ENCODE measurements at regions of chr2 and their contacts with region 1.

Region 1: GRCh38 chr2:216090369-216090786 is 8.7 kb downstream of the TMEM169 start:
- DNase-seq: peak; percentile 30
- H3K4me3 Mint-ChIP-seq: no peak overlapping the region
- H3K27ac Mint-ChIP-seq: peak overlapping the region; percentile 62
- H3K4me1 Mint-ChIP-seq: peaks cover 34% of the 10 kb centered on the region
- H3K27me3 Mint-ChIP-seq: no peaks in the 10 kb centered on the region

Region 2: DNA sequence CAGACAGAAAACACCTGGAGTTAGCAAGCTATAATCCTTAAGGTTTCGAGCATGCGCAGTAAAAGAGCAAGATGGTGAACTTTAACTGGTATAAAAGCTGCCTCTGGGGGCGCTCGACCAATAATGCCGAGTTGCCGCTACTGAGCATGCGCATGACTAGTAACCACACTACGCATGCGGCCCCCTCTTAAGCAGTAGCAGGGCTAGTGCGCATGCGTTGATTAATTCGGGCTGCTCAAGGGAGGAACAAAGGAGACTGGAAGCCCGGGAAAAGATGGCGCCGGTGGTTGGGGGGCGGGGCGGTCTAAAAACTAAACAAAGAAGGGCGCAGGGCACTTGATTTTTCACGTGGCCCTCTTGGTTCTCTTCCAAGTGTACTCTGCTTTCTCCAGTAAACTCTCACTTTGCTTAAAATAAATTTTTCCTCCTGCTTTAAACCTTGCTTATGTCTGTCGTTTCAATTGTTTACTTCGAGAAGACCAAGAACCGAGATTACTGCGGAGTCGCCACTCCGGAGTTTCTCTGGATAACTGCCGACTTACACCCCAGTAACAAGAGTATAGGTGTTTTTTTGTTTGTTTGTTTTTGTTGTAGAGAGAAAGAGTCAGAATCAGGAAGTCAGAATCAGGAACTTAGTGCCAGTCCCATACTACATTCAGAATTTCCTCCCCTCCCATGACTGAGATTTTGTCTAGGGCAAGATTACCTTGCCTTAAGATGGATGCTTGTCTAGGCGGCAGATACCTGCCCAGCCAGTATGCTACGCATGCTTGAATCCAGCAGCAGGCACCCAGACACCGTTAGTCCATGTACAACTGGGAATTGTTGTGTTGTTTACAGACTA is 24.6 kb after region 1 on chr2:
- CTCF ChIA-PET with region 1: interaction called, 12 read pairs
- intact Hi-C with region 1: no loop called
- DNase-seq: peak; percentile 99
- H3K4me3 Mint-ChIP-seq: peak overlapping the region; percentile 89
- H3K27ac Mint-ChIP-seq: peak overlapping the region; percentile 99
- H3K4me1 Mint-ChIP-seq: peaks cover 91% of the 10 kb centered on the region
- H3K27me3 Mint-ChIP-seq: no peaks in the 10 kb centered on the region

Measured in activated naive CD4-positive, alpha-beta T cell treated with anti-CD3 and anti-CD28 coated beads for 36 hours (primary cell).